ENCODE measurements at regions of chr9 and their contacts with region 1.

Region 1: DNA sequence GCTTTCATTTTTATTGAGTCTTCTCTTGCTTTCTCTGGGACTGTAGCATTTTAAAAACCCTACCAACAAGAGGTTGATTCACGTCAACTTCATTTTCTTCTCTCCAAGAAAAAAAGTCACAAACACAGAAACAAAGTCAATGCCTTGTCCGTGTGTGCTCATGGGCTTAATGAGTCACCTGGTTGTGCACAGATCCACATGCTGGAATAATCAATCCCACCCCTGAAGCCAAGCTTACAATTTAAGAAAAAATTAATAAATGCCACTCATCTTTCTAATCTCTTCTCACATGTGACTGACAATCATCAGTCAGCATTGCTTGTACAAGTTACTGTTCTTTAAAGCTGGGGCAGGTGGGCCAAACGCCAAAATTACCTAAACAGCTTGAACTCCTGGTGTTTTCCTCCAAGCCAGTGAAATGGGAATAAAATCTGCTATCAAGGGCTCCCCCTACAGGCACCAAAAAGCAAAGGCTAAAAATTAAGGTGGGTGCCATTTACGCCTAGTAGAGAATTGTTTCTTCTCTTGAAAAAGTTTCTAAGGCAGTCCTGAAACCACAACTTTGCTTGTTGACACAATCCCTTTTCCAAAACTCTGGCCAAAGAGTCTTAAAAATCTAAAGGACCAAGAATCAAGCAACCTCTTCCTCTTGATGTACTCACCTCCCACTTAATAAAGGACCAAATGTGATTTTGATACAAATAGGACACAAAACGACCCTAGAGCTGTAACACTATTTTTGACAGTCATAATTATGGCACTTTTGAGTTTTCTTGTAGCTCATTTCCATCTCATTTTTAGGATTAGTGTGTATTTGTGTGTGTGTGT is 21.3 kb downstream of the TRMO start:
- DNase-seq: peak; percentile 59 to 74
- ATAC-seq: peak; percentile 77 to 86; a peak in 4 of 6 replicates
- H3K4me3 ChIP-seq: no peak overlapping the region
- H3K27ac ChIP-seq: peak overlapping the region in 1 of 2 experiments; percentile 46; a peak in 3 of 6 replicates
- H3K4me1 ChIP-seq: peaks cover 3% of the 10 kb centered on the region; the same call in 2 of the 3 replicates
- CTCF ChIP-seq: peak; percentile 89
- EP300 ChIP-seq: no peak
- POLR2A ChIP-seq: no peak
- RAD21 ChIP-seq: peak; percentile 88 to 89

Region 2: DNA sequence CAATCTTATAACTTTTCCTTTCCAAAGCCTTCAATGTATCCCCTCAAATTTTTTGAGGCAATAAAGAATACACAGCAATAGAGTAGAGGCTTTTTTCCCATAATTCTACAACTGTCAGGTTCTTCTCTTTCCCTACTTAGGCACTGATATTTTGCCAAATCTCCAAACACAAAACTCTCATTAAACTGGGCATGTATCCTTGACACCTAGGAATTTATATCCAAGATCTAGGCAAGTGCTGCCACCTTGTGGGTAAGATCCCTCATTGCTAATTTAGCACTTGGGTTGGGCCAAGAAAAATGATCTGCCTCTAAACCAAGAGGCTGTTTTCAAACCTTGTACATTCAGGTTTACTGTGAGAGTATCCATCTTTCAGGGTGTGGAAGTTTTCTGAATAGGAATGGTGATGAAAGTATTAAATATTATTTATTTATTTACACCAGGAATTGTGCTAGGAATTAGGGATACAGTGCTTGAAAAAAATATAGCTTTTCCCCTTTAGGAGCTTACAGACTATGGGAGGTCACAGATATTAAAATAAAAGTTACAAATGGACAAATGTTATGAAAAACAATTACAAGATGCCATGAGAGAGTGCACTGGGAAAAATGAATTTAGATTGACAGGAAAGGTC is 285.4 kb before region 1 on chr9:
- CTCF ChIA-PET with region 1: no interaction called
- POLR2A ChIA-PET with region 1: no interaction called
- DNase-seq: peak; percentile 64 to 69
- ATAC-seq: peak; percentile 68 to 84; a peak in 4 of 6 replicates
- H3K4me3 ChIP-seq: no peak overlapping the region
- H3K27ac ChIP-seq: no peak overlapping the region
- H3K4me1 ChIP-seq: no peaks in the 10 kb centered on the region
- CTCF ChIP-seq: peak; percentile 88
- EP300 ChIP-seq: no peak
- POLR2A ChIP-seq: no peak
- RAD21 ChIP-seq: peak; percentile 74 to 81

Region 3: DNA sequence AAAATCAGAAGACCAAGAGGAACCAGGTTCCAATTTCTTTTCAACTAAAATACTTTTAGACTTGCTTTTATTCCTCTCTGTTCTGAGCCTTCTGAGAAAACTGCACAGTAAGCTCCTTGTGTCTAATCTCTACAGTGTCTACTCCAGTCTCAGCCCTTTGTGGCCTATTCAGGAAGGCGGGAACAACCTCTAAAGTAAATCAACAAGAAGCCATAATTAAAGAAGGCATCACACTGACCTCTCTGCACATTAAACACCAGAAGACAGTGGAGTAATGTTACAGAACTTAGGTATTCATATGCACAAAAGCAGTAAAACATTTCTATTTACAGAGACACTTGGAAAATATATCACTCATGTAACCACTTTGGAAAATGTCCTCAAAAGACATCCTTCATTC is 218.7 kb before region 1 on chr9:
- CTCF ChIA-PET with region 1: interaction called, 10 read pairs
- POLR2A ChIA-PET with region 1: no interaction called
- DNase-seq: no peak
- ATAC-seq: no peak
- H3K4me3 ChIP-seq: no peak overlapping the region
- H3K27ac ChIP-seq: no peak overlapping the region
- H3K4me1 ChIP-seq: no peaks in the 10 kb centered on the region
- CTCF ChIP-seq: no peak
- EP300 ChIP-seq: no peak
- POLR2A ChIP-seq: no peak
- RAD21 ChIP-seq: no peak

Region 4: GRCh38 chr9:97721396-97721795 is 179.6 kb before region 1 on chr9:
- CTCF ChIA-PET with region 1: interaction called, 16 read pairs
- POLR2A ChIA-PET with region 1: no interaction called
- DNase-seq: no peak
- ATAC-seq: no peak
- H3K4me3 ChIP-seq: no peak overlapping the region
- H3K27ac ChIP-seq: no peak overlapping the region
- H3K4me1 ChIP-seq: 0 out of 3 replicates have a peak, but pooled peaks cover 3% of the 10 kb centered on the region
- CTCF ChIP-seq: no peak
- EP300 ChIP-seq: no peak
- POLR2A ChIP-seq: no peak
- RAD21 ChIP-seq: no peak

Region 5: GRCh38 chr9:97848235-97848581 is 52.7 kb before region 1 on chr9:
- CTCF ChIA-PET with region 1: interaction called, 22 read pairs
- POLR2A ChIA-PET with region 1: no interaction called
- DNase-seq: no peak
- ATAC-seq: no peak
- H3K4me3 ChIP-seq: no peak overlapping the region
- H3K27ac ChIP-seq: no peak overlapping the region
- H3K4me1 ChIP-seq: peaks cover 6% of the 10 kb centered on the region; the same call in 1 of the 3 replicates
- CTCF ChIP-seq: no peak
- EP300 ChIP-seq: no peak
- POLR2A ChIP-seq: no peak
- RAD21 ChIP-seq: no peak

Region 6: DNA sequence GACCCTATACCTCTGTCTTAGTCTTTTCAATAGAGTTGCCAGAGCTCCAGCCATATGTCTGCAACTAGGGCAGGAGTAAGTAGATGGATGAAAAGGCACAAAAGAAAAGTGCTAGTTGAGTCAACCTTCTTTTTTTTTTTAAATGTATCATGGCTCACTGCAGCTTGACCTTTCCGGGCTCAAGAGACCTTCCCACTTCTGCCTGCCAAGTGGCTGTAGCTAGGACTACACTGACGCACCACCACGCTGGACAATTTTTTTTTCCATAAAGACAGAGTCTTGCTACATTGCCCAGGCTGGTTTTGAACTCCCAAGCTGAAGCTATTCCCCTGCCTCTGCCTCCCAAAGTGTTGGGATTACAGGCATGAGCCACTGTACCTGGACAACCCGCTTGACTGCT is 20.6 kb before region 1 on chr9:
- CTCF ChIA-PET with region 1: interaction called, 15 read pairs
- POLR2A ChIA-PET with region 1: interaction called, 5 read pairs
- DNase-seq: no peak
- ATAC-seq: no peak
- H3K4me3 ChIP-seq: no peak overlapping the region
- H3K27ac ChIP-seq: peak overlapping the region in 1 of 2 experiments; percentile 90; a peak in 3 of 6 replicates
- H3K4me1 ChIP-seq: peaks cover 22% of the 10 kb centered on the region
- CTCF ChIP-seq: no peak
- EP300 ChIP-seq: no peak
- POLR2A ChIP-seq: no peak
- RAD21 ChIP-seq: no peak